Activated CD8-positive, alpha-beta T cell treated with anti-CD3 and anti-CD28 coated beads, Interleukin-2, amount 10 ng/mL, durations not matched to agents 7 days and 5 days (primary cell): ENCODE measurements at regions of chr17 and their contacts with region 1.

Region 1: DNA sequence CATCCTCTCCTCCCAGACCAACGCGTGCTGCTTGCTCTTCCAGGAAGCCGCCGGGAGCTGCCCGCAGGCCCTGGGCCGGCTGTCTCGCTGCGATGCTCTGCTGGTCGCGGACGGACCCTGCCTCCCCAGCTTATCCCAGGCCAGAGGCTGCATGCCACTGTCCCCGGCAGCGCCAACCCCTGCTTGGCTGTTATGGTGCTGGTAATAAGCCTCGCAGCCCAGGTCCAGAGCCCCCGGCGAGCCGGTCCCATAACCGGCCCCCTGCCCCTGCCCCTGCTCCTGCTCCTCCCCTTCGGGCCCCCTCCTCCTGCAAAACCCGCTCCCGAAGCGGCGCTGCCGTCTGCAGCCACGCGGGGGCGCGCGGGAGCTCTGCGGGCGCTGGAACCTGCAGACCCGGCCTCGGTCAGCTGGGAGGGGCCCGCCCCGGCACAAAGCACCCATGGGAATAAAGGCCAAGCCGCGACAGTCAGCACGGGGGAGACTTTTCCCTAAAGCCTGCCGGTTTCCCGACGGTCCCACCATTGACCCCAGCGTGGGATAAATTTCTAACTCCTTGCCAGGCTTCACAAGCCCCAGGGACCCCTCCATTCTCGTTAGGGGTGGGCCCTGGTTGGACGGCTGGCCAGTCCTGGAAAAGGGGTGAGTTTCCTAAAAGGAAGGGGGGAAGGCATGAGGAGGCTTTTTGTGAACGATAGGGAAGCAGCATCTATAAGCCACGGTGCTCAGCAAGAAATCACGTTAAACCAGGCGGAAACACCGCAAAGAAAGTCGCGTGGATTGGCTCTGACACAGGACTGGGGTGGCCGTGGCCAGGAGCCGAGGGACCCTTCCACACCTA is 11.2 kb downstream of the ENPP7 start:
- DNase-seq: peak; percentile 74
- ATAC-seq: peak; percentile 67
- H3K4me3 Mint-ChIP-seq: no peak overlapping the region
- H3K27ac Mint-ChIP-seq: no peak overlapping the region
- H3K4me1 Mint-ChIP-seq: peaks cover 14% of the 10 kb centered on the region
- H3K27me3 Mint-ChIP-seq: peaks cover 12% of the 10 kb centered on the region

Region 2: DNA sequence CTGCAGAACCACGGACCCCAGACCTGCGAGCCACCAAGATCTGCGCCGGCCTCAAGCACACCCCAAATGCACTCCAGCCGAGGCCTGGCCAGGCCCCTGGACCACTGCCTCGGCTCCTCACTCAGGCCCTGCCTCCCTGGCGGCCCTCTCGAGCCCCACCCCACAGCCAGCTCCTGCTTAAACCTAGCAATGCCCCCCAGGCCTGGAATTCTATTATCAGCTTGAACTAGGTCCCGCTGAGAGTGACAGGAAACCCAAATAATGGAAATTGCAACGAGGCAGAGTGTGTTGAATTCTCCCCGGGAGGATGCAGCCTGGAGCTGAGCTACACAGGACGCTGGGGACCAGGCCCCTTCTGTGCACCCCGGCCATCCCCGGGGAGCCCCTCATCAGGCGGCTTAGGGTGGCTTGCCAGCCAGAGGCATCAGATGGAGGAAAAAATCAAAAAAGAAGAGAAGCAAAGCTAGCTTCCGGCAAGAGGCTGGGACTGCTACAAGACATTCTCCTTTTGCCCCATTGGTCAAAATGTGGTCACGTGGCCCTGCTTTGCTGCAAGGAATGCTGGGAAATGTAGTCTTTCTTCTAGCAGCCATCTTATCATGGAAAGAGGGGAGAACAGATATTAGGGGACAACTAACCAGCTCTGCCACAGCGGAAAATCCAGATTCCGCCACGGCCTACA is 13.6 kb before region 1 on chr17:
- CTCF ChIA-PET with region 1: interaction called, 19 read pairs
- POLR2A ChIA-PET with region 1: interaction called, 3 read pairs
- DNase-seq: peak; percentile 92
- ATAC-seq: peak; percentile 83
- H3K4me3 Mint-ChIP-seq: peak overlapping the region; percentile 64
- H3K27ac Mint-ChIP-seq: peak overlapping the region; percentile 83
- H3K4me1 Mint-ChIP-seq: peaks cover 21% of the 10 kb centered on the region
- H3K27me3 Mint-ChIP-seq: no peaks in the 10 kb centered on the region

Region 3: DNA sequence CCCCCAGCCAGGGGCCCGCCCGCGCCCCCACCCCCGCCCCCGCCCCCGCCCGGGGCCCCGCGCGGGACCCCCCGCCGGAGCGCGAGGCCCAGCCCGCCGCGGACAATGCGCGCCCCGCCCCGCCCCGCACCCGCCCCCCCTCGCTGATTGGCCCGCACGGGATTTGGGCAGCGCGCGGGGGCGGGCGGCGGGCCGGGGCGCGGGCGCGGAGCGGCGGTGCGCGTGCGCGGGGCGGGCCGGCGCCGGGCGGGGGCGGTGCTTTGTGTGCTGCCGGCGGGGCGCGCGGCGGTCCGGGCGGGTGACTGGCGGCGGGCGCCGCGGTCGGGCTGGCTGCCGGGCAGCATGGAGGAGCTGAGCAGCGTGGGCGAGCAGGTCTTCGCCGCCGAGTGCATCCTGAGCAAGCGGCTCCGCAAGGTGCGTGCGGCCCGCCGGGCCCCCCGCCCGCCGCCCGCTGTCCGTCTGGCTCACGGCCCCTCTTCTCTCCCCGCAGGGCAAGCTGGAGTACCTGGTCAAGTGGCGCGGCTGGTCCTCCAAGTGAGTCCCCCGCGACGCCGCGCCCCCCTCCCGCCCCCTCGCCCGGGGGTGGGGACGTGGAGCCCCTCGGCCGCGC is 36.0 kb after region 1 on chr17 and contains the start of gene CBX2:
- CTCF ChIA-PET with region 1: interaction called, 10 read pairs
- POLR2A ChIA-PET with region 1: no interaction called
- DNase-seq: peak; percentile 84
- ATAC-seq: peak; percentile 86
- H3K4me3 Mint-ChIP-seq: peak within 1 kb of the TSS; percentile 91
- H3K27ac Mint-ChIP-seq: peak within 1 kb of the TSS; percentile 65
- H3K4me1 Mint-ChIP-seq: peaks cover 54% of the 10 kb centered on the region
- H3K27me3 Mint-ChIP-seq: peaks cover 38% of the 10 kb centered on the region
- total RNA-seq, gene CBX2: 16.2 to 16.5 TPM